ENCODE measurements at regions of chr6 and their contacts with region 1.

Region 1: DNA sequence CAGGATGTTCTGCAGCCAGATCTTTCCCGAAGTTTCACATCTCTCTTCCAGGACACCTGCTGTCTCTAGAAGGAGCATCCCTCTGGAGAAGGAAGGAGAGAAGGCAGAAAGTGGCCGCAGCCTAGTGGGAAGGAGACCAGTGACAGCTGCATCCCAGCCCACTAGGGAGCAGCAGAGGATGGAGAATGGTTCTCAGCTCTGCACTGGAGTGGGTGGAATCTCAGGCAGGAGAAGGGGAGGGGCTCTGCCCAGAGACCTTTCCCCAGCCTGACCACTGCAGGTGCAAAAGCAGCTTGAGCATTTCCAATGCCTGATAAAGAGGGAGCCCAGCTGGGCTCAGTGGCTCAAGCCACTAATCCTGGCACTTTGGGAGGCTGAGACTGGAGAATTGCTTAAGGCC is 32.3 kb downstream of the NCR2 start:
- DNase-seq: peak; percentile 36
- ATAC-seq: no peak
- H3K4me3 Mint-ChIP-seq: no peak overlapping the region
- H3K27ac Mint-ChIP-seq: no peak overlapping the region
- H3K4me1 Mint-ChIP-seq: peaks cover 15% of the 10 kb centered on the region
- H3K27me3 Mint-ChIP-seq: peaks cover 43% of the 10 kb centered on the region

Region 2: GRCh38 chr6:41306187-41306854 is 61.4 kb before region 1 on chr6:
- CTCF ChIA-PET with region 1: interaction called, 8 read pairs
- POLR2A ChIA-PET with region 1: no interaction called
- intact Hi-C with region 1: loop called in 1 of 2 experiments (anchors 1 kb)
- DNase-seq: peak; percentile 59
- ATAC-seq: no peak
- H3K4me3 Mint-ChIP-seq: no peak overlapping the region
- H3K27ac Mint-ChIP-seq: no peak overlapping the region
- H3K4me1 Mint-ChIP-seq: peaks cover 9% of the 10 kb centered on the region
- H3K27me3 Mint-ChIP-seq: no peaks in the 10 kb centered on the region

Region 3: GRCh38 chr6:41396335-41396734 is 28.6 kb after region 1 on chr6:
- CTCF ChIA-PET with region 1: interaction called, 11 read pairs
- POLR2A ChIA-PET with region 1: no interaction called
- intact Hi-C with region 1: no loop called
- DNase-seq: no peak
- ATAC-seq: no peak
- H3K4me3 Mint-ChIP-seq: no peak overlapping the region
- H3K27ac Mint-ChIP-seq: no peak overlapping the region
- H3K4me1 Mint-ChIP-seq: no peaks in the 10 kb centered on the region
- H3K27me3 Mint-ChIP-seq: peaks cover 30% of the 10 kb centered on the region

Region 4: GRCh38 chr6:41442800-41443501 is 75.3 kb after region 1 on chr6:
- CTCF ChIA-PET with region 1: interaction called, 10 read pairs
- POLR2A ChIA-PET with region 1: no interaction called
- intact Hi-C with region 1: no loop called
- DNase-seq: peak; percentile 52
- ATAC-seq: no peak
- H3K4me3 Mint-ChIP-seq: no peak overlapping the region
- H3K27ac Mint-ChIP-seq: no peak overlapping the region
- H3K4me1 Mint-ChIP-seq: peaks cover 30% of the 10 kb centered on the region
- H3K27me3 Mint-ChIP-seq: peaks cover 8% of the 10 kb centered on the region

Region 5: GRCh38 chr6:41591859-41592502 is 224.3 kb after region 1 on chr6:
- CTCF ChIA-PET with region 1: interaction called, 13 read pairs
- POLR2A ChIA-PET with region 1: no interaction called
- intact Hi-C with region 1: loop called (anchors 1 kb)
- DNase-seq: peak; percentile 87
- ATAC-seq: peak; percentile 85
- H3K4me3 Mint-ChIP-seq: no peak overlapping the region
- H3K27ac Mint-ChIP-seq: no peak overlapping the region
- H3K4me1 Mint-ChIP-seq: peaks cover 3% of the 10 kb centered on the region
- H3K27me3 Mint-ChIP-seq: no peaks in the 10 kb centered on the region

Region 6: DNA sequence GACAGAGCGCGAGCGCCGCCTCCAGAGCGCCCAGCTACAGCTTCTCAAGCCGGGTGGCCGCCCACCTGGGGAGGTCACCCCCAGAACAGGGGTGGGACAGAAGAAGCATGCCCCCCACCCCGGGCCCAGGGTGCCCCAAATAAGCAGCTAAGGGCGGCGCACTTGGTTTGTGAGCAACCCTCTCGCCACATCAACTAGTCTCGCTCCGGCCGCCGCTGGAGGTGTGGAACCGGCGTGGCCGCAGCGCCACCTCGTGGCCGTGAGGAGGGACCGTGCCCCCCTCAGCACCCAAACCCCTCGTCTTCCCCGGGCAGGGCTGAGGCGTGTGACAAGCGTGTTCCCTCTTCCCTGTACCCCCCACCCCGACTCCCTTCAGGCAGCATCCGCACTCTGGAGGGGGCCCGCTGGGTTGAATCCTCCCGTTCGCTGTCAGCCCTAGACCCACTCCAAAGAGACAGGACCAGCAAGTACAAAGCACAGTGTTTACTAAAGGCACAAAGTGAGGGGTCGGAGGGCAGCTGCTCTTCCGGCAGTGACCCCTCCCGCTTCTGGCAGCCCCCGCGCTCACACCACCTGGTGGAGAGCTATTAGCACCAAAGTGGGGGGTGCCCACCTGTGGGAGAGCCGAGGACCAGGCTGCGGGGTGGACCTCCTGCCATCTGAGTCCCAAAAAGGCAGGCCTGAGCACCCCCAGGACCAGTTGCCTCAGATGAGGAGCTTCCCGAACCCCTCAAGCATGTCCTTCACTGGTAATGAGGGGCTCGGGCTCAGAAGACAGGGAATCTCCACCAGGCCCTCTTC is 316.0 kb after region 1 on chr6:
- CTCF ChIA-PET with region 1: interaction called, 12 read pairs
- POLR2A ChIA-PET with region 1: no interaction called
- intact Hi-C with region 1: loop called (anchors 1 kb)
- DNase-seq: peak; percentile 90
- ATAC-seq: peak; percentile 92
- H3K4me3 Mint-ChIP-seq: peak overlapping the region; percentile 69
- H3K27ac Mint-ChIP-seq: peak overlapping the region; percentile 77
- H3K4me1 Mint-ChIP-seq: peaks cover 8% of the 10 kb centered on the region
- H3K27me3 Mint-ChIP-seq: no peaks in the 10 kb centered on the region